ENCODE measurements at regions of chr16 and their contacts with region 1.

Region 1: GRCh38 chr16:85821441-85822135 is 22.1 kb downstream of the COX4I1 start:
- DNase-seq: peak; percentile 79
- ATAC-seq: peak; percentile 83
- H3K4me3 Mint-ChIP-seq: no peak overlapping the region
- H3K27ac Mint-ChIP-seq: no peak overlapping the region
- H3K4me1 Mint-ChIP-seq: no peaks in the 10 kb centered on the region
- H3K27me3 Mint-ChIP-seq: peaks cover 27% of the 10 kb centered on the region

Region 2: GRCh38 chr16:85898521-85899442 is 77.2 kb after region 1 on chr16 and contains the start of gene IRF8:
- CTCF ChIA-PET with region 1: interaction called, 28 read pairs
- DNase-seq: peak; percentile 70
- ATAC-seq: peak; percentile 86
- H3K4me3 Mint-ChIP-seq: peak within 1 kb of the TSS; percentile 70
- H3K27ac Mint-ChIP-seq: peak within 1 kb of the TSS; percentile 41
- H3K4me1 Mint-ChIP-seq: peaks cover 47% of the 10 kb centered on the region
- H3K27me3 Mint-ChIP-seq: peaks cover 62% of the 10 kb centered on the region
- total RNA-seq, gene IRF8: 8.4 to 11.1 TPM

Region 3: GRCh38 chr16:85969591-85969990 is 148.0 kb after region 1 on chr16:
- CTCF ChIA-PET with region 1: interaction called, 10 read pairs
- DNase-seq: no peak
- ATAC-seq: no peak
- H3K4me3 Mint-ChIP-seq: no peak overlapping the region
- H3K27ac Mint-ChIP-seq: no peak overlapping the region
- H3K4me1 Mint-ChIP-seq: peaks cover 7% of the 10 kb centered on the region
- H3K27me3 Mint-ChIP-seq: peaks cover 40% of the 10 kb centered on the region

Region 4: DNA sequence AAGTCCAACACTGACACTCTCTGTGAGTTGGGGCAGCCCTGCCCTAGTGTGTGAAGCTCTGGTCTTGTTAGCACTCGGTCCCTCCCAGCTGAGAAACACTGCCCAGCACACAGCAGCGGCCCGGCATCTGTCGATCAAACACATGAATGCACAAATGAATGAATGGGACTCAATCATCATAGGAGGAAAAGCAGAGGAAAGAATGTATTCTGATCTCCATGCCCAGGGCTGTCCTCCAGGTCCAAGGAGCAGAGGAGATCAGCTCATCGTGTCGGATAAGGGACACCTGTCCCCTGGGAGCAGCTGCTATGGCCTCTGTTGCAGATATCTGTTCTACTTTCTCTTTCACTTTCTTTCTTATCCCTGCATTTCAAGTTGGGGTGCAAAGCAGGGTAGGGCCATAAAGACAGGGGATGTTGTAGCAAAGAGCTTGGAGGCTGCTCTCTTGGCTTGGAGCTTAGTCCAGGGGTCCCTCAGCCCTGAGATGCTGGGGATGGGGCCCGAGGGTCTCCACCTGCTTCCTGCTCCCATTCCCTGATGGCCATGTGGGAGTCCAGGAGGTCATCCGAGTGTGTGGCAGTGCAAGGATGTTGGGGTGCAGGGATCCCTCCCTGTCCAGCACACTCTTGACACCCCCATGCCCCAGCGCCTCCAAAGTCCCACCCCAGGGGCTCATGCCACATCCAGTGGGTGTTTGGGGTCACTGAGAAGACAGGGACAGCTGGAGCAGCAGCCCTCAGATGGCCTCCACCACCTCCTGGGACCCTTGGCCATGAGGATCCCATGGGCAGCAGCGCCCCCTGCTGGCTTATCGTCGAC is 165.6 kb after region 1 on chr16:
- CTCF ChIA-PET with region 1: interaction called, 246 read pairs
- DNase-seq: peak; percentile 49
- ATAC-seq: peak; percentile 52
- H3K4me3 Mint-ChIP-seq: peak overlapping the region; percentile 5
- H3K27ac Mint-ChIP-seq: no peak overlapping the region
- H3K4me1 Mint-ChIP-seq: peaks cover 42% of the 10 kb centered on the region
- H3K27me3 Mint-ChIP-seq: peaks cover 22% of the 10 kb centered on the region

Region 5: GRCh38 chr16:86016201-86016871 is 194.7 kb after region 1 on chr16:
- CTCF ChIA-PET with region 1: interaction called, 227 read pairs
- DNase-seq: peak; percentile 37
- ATAC-seq: no peak
- H3K4me3 Mint-ChIP-seq: no peak overlapping the region
- H3K27ac Mint-ChIP-seq: no peak overlapping the region
- H3K4me1 Mint-ChIP-seq: peaks cover 9% of the 10 kb centered on the region
- H3K27me3 Mint-ChIP-seq: peaks cover 33% of the 10 kb centered on the region

Region 6: GRCh38 chr16:86834451-86835035 is 1013.0 kb after region 1 on chr16:
- CTCF ChIA-PET with region 1: no interaction called
- DNase-seq: no peak
- ATAC-seq: no peak
- H3K4me3 Mint-ChIP-seq: no peak overlapping the region
- H3K27ac Mint-ChIP-seq: no peak overlapping the region
- H3K4me1 Mint-ChIP-seq: no peaks in the 10 kb centered on the region
- H3K27me3 Mint-ChIP-seq: peaks cover 7% of the 10 kb centered on the region